HEK293 (cell line): ENCODE measurements at regions of chr2 and their contacts with region 1.

Region 1: GRCh38 chr2:192162392-192163042 is 32.2 kb downstream of the TMEFF2 start:
- H3K4me3 ChIP-seq: no peak overlapping the region
- H3K27ac ChIP-seq: no peak overlapping the region
- H3K4me1 ChIP-seq: no peaks in the 10 kb centered on the region; the same call in 1 of the 2 replicates
- CTCF ChIP-seq: peak; percentile 73; the same call in 1 of the 2 replicates

Region 2: DNA sequence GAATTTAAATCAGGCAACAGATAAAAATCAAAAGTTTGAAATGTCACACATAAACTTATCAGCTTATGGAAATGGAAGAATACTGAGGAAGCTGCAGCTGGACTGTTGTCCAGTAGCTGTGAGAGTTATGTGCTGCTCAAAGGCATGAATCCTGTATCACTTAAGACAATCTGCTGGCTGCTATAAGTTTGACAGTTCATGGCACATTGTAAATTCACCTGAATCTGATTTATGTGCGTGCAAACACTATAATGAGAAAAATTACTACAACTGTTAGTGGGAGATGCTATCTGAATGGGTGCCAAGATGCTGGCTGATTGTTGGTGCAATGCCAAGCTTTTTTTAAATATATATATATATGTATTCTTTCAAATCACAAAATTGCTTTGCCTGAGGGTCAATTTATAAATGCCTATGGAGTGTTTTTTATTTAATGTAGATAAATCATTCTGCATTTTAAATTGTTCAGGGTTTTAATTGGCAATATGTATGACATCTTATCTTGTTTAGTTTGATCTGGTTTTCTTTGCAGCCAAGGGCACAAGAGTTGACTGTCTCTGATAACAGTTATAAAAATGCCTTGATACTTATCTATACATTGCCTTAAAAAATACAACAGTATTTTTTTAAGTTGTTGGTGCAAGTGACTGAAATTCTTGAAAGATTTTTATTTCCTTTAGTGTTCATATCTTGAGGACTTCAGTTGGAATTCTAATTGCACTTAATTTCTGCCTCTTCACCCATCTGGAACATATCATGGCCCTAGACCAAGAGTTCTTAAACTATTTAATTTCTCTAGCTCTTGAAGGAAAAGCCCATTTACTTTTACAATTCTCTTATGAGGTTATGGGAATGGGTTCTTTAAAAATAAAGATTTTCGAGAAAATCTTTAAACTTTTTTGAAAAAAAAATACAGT is 364.3 kb before region 1 on chr2:
- CTCF ChIA-PET with region 1: interaction called, 12 read pairs
- POLR2A ChIA-PET with region 1: no interaction called
- H3K4me3 ChIP-seq: no peak overlapping the region
- H3K27ac ChIP-seq: no peak overlapping the region
- H3K4me1 ChIP-seq: no peaks in the 10 kb centered on the region
- CTCF ChIP-seq: no peak

Region 3: GRCh38 chr2:191811807-191812602 is 350.5 kb before region 1 on chr2:
- CTCF ChIA-PET with region 1: interaction called, 117 read pairs
- POLR2A ChIA-PET with region 1: interaction called, 7 read pairs
- H3K4me3 ChIP-seq: no peak overlapping the region
- H3K27ac ChIP-seq: no peak overlapping the region
- H3K4me1 ChIP-seq: no peaks in the 10 kb centered on the region
- CTCF ChIP-seq: peak; percentile 57; the same call in 1 of the 2 replicates

Region 4: DNA sequence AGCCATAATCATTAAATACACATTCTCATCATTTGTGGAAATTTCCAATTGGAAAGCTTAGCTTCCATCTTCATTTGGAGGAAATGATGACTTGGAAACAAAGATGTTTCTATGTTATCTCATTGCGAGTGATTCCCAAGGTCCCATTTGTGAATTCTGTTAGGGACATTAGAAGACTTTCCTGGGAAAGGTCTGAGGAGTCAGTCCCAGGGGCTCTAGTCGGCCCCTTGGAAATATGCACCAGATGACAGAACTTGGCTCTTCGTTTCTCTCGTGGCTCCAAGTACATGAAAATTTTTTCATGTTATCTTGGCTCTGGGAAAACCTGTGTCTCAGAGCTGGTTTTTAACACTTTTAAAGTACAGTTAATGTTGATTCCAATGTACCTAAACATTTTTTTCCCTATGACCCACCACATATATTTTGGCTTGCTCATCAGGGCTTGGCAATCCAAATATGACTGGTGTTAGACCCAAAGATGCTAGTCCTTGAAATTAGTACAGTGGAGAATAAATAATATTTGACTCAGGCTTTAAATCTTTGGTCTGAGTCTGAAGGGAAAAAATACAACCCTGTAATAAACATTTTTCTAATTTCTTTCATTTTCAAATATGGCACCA is 300.3 kb before region 1 on chr2:
- CTCF ChIA-PET with region 1: interaction called, 10 read pairs
- POLR2A ChIA-PET with region 1: no interaction called
- H3K4me3 ChIP-seq: no peak overlapping the region
- H3K27ac ChIP-seq: no peak overlapping the region
- H3K4me1 ChIP-seq: no peaks in the 10 kb centered on the region
- CTCF ChIP-seq: no peak

Region 5: GRCh38 chr2:192123847-192124246 is 38.7 kb before region 1 on chr2:
- CTCF ChIA-PET with region 1: no interaction called
- POLR2A ChIA-PET with region 1: no interaction called
- H3K4me3 ChIP-seq: no peak overlapping the region
- H3K27ac ChIP-seq: no peak overlapping the region
- H3K4me1 ChIP-seq: no peaks in the 10 kb centered on the region
- CTCF ChIP-seq: no peak

Region 6: DNA sequence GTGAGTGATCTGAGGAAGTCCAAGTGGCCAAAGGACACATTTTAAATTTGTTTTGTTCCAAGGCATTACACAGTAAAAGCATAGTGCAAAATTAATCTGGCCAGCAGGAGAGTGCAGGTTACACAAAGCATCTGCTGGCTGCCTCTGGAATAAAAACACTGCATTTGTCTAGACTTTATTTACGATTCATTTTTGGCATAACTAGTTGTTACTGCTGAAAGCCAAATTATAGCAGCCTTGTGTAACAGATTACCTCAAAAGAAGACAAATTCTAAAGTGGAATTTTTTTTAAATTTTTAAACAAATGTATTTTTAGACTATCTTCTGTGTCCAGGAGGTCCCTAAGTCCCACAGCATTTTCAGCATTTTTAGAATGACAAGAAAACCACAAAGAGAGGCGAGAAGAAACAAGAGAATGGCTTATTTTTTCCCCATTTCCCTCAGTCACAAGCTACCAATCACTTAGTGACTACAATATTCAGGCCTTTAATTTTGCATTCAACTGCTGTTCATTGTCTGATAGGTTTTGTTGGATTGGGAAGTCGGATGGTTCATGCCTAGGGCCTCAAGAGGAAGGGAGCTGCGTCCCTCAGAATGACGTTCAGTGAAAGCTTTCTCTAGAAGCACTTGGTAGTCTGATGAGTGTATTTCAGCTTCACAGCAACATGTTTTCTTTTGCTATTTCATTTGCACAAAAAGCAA is 13.7 kb before region 1 on chr2:
- CTCF ChIA-PET with region 1: interaction called, 11 read pairs
- POLR2A ChIA-PET with region 1: no interaction called
- H3K4me3 ChIP-seq: no peak overlapping the region
- H3K27ac ChIP-seq: no peak overlapping the region
- H3K4me1 ChIP-seq: no peaks in the 10 kb centered on the region; the same call in 1 of the 2 replicates
- CTCF ChIP-seq: no peak

Region 7: DNA sequence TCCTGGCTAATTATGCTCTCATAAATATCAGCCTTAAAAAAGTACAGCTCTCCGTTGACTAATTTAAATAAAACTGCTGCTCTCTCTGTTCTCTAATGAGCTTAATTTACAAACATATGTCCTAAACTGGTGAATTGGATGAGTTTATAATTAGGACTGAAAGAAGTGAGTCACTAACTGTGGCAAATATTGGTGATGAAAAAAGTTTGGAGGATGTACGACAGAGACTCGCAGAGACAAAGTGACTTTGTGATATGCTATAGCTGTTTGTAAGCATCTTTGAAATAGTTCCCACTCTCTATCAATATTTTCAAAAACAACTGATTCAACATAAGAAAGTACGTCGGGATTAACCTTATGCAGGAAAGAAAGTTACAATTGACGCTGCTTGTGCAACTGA is 171.1 kb after region 1 on chr2:
- CTCF ChIA-PET with region 1: no interaction called
- POLR2A ChIA-PET with region 1: no interaction called
- H3K4me3 ChIP-seq: no peak overlapping the region
- H3K27ac ChIP-seq: no peak overlapping the region
- H3K4me1 ChIP-seq: no peaks in the 10 kb centered on the region
- CTCF ChIP-seq: no peak